ENCODE measurements at regions of chr20 and their contacts with region 1.

Region 1: DNA sequence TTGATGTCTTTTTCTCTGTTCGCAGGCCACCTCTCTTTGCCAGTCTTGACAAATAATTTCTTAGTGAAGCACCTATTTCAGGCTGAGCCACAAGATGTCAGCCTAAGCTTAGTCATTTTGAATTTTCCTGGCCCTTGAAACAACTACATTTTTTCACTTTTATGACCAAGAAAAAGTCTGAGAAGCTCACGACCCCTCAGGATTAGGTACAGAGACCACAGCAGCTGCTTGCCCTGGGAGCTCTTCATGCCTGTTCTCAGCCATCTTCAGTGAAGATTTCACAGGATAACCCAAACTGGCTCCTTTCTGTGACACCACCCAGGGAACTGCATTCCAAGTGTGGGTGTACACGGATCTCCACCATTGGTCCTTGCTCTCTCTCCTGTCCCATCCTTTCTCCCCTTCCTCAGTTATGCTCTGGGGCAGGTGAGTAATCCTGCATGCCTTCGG is 38.4 kb upstream of the SPTLC3 start:
- DNase-seq: peak; percentile 56
- H3K4me3 Mint-ChIP-seq: no peak overlapping the region
- H3K27ac Mint-ChIP-seq: no peak overlapping the region
- H3K4me1 Mint-ChIP-seq: no peaks in the 10 kb centered on the region
- H3K27me3 Mint-ChIP-seq: no peaks in the 10 kb centered on the region
- CTCF ChIP-seq: peak; percentile 70

Region 2: GRCh38 chr20:11553603-11554002 is 1416.8 kb before region 1 on chr20:
- CTCF ChIA-PET with region 1: interaction called, 4 read pairs
- POLR2A ChIA-PET with region 1: no interaction called
- intact Hi-C with region 1: loop called (anchors 10 kb)
- DNase-seq: peak; percentile 30
- H3K4me3 Mint-ChIP-seq: no peak overlapping the region
- H3K27ac Mint-ChIP-seq: no peak overlapping the region
- H3K4me1 Mint-ChIP-seq: peaks cover 20% of the 10 kb centered on the region
- H3K27me3 Mint-ChIP-seq: no peaks in the 10 kb centered on the region
- CTCF ChIP-seq: peak; percentile 15

Region 3: GRCh38 chr20:12722096-12722495 is 248.3 kb before region 1 on chr20:
- CTCF ChIA-PET with region 1: no interaction called
- POLR2A ChIA-PET with region 1: no interaction called
- intact Hi-C with region 1: no loop called
- DNase-seq: no peak
- H3K4me3 Mint-ChIP-seq: no peak overlapping the region
- H3K27ac Mint-ChIP-seq: no peak overlapping the region
- H3K4me1 Mint-ChIP-seq: no peaks in the 10 kb centered on the region
- H3K27me3 Mint-ChIP-seq: no peaks in the 10 kb centered on the region
- CTCF ChIP-seq: no peak

Region 4: DNA sequence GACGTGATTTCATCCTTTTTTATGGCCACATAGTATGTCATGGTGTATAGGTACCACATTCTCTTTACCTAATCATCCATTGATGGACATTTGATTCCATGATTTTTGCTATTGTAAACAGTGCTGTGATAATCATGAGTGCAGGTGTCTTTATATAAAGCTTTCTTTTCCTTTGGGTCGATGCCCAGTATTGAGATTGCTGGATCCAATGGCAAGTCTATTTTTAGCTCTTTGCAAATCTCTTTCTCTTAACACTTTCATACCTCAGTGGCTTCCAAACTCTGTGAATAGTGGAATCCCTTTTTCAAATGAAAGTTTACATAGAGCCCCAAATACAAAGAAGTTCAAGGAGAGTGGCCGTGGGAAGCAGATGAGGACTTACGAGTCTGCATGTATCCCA is 67.4 kb before region 1 on chr20:
- CTCF ChIA-PET with region 1: no interaction called
- POLR2A ChIA-PET with region 1: no interaction called
- intact Hi-C with region 1: no loop called
- DNase-seq: no peak
- H3K4me3 Mint-ChIP-seq: no peak overlapping the region
- H3K27ac Mint-ChIP-seq: no peak overlapping the region
- H3K4me1 Mint-ChIP-seq: no peaks in the 10 kb centered on the region
- H3K27me3 Mint-ChIP-seq: peaks cover 12% of the 10 kb centered on the region
- CTCF ChIP-seq: no peak

Region 5: GRCh38 chr20:12925214-12925755 is 45.1 kb before region 1 on chr20:
- CTCF ChIA-PET with region 1: interaction called, 558 read pairs
- POLR2A ChIA-PET with region 1: interaction called, 12 read pairs
- intact Hi-C with region 1: loop called (anchors 1 kb)
- DNase-seq: peak; percentile 78
- H3K4me3 Mint-ChIP-seq: no peak overlapping the region
- H3K27ac Mint-ChIP-seq: no peak overlapping the region
- H3K4me1 Mint-ChIP-seq: peaks cover 24% of the 10 kb centered on the region
- H3K27me3 Mint-ChIP-seq: no peaks in the 10 kb centered on the region
- CTCF ChIP-seq: peak; percentile 94

Region 6: GRCh38 chr20:12984069-12984765 is 13.8 kb after region 1 on chr20:
- CTCF ChIA-PET with region 1: interaction called, 56 read pairs
- POLR2A ChIA-PET with region 1: interaction called, 3 read pairs
- intact Hi-C with region 1: no loop called
- DNase-seq: peak; percentile 23
- H3K4me3 Mint-ChIP-seq: no peak overlapping the region
- H3K27ac Mint-ChIP-seq: no peak overlapping the region
- H3K4me1 Mint-ChIP-seq: peaks cover 15% of the 10 kb centered on the region
- H3K27me3 Mint-ChIP-seq: no peaks in the 10 kb centered on the region
- CTCF ChIP-seq: no peak

Region 7: DNA sequence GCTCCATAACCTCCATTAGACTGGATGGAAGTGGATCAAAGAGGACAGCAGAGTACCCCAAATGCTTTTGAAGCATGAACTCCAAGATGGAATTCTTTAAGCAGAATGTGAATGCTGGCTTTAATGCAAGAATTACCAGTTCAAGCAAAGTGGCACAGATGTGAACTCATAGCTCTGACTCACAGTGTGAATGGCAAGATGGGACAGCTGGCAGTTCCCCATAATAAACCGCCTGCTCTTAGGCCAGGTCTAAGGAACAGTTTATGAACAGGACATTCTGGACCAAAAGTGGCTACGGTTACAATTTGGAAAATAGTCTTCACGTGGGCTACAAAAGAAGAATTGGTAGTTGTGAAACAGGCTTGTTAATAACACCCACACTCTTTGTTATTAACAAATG is 114.9 kb after region 1 on chr20:
- CTCF ChIA-PET with region 1: interaction called, 14 read pairs
- POLR2A ChIA-PET with region 1: no interaction called
- intact Hi-C with region 1: no loop called
- DNase-seq: no peak
- H3K4me3 Mint-ChIP-seq: no peak overlapping the region
- H3K27ac Mint-ChIP-seq: no peak overlapping the region
- H3K4me1 Mint-ChIP-seq: no peaks in the 10 kb centered on the region
- H3K27me3 Mint-ChIP-seq: no peaks in the 10 kb centered on the region
- CTCF ChIP-seq: no peak

Region 8: DNA sequence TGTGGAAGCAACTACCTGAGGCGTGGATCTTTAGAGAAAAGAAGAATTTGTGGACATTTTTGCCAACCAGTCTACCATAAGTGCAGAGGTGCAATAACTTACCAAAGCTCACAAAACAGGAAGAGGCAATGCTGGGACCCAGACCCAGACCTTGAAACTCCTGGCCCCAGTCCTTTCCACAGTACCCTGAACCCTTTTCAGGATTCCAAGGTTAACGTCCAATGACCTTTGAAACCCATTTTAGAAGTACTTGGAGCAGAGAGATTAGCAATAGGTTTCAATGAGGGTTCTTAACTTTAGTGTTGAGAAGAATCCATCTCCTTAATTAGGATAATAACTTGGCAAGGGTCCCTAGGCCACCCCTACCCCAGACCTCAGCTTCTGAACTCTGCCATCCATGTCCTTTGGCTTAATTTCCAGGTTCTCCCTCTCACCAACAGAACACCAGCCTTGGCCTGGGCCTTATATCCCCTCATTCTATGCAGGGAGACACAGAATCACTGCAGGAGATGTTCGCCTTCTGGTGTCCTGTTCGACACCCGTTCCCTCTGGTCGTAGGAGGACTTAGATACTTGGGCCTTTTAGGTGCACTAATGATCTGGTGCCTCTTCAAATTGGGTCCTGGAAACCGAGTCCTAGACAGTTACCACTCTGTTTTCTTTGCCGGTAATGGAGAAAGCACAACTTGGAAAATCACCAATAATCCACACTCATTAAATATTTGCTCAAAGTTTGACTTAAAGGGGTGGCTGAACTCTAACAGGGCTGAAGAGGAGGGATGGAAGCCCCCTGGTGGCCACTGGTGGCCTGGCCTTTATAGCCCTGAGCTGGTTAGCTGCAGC is 291.3 kb after region 1 on chr20:
- CTCF ChIA-PET with region 1: interaction called, 4 read pairs
- POLR2A ChIA-PET with region 1: no interaction called
- intact Hi-C with region 1: loop called (anchors 10 kb)
- DNase-seq: peak; percentile 63
- H3K4me3 Mint-ChIP-seq: no peak overlapping the region
- H3K27ac Mint-ChIP-seq: no peak overlapping the region
- H3K4me1 Mint-ChIP-seq: peaks cover 8% of the 10 kb centered on the region
- H3K27me3 Mint-ChIP-seq: no peaks in the 10 kb centered on the region
- CTCF ChIP-seq: peak; percentile 62

Region 9: DNA sequence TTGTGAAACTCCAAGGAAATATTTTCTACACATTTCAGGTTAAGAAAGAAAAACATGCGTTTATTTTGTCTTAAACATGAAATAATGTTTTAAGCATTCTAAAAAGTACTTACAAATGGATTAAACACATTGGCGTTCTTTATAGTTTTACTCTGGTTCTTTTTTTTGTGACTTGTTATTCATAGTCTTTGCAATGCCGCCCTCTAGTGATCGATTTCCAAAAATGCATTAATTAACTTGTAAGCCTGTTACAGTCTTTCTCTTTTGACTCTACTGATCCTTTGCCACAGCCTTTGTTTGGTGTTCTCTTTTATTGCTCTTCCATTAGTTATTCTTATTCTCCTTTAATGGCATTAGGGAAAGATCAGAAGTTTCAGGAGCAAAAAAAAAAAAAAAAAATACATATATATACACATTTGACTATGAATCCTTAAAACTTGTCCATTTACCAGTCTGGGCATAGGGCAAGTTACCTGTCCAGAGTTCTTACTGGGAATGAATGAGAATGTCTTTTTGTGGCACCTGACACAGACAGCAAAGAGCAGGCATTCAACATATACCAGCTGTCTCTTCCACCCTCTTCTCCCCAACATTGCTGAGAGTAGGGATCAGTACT is 1084.8 kb after region 1 on chr20:
- CTCF ChIA-PET with region 1: no interaction called
- POLR2A ChIA-PET with region 1: no interaction called
- intact Hi-C with region 1: loop called (anchors 10 kb)
- DNase-seq: peak; percentile 79
- H3K4me3 Mint-ChIP-seq: no peak overlapping the region
- H3K27ac Mint-ChIP-seq: no peak overlapping the region
- H3K4me1 Mint-ChIP-seq: no peaks in the 10 kb centered on the region
- H3K27me3 Mint-ChIP-seq: no peaks in the 10 kb centered on the region
- CTCF ChIP-seq: peak; percentile 50

Measured in MCF 10A (cell line).